ENCODE measurements at regions of chr1 and their contacts with region 1.

Region 1: DNA sequence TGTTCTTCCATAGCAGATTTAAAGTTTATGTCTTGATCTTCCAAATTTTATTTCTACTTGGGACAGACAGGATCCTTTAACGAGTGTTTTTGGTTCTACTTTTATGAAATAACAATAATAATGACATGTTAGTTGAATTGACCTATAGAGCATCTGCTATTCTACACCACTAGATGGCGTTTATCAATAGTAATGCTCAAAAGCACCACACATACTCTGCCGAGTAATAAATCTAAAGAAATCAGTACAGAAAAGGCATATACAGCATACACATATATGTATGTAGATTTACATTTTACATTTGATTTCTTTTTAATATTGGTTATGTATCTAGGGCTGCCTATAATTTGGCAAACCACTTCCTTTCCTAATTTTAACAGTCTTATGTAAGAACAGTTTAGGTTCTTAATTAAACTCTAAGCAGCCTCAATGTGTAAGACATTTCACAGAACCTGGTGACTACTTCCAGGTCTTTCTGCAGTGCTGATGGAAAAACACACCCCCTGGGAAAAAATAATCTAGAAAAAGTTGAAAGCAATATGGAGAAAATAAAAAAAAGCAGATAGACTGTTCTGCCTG is 5.9 kb upstream of the SIPA1L2 start:
- DNase-seq: peak in 2 of 5 donors; percentile 58 to 77
- H3K4me3 ChIP-seq: no peak overlapping the region
- H3K27ac ChIP-seq: no peak overlapping the region
- H3K4me1 ChIP-seq: no peaks in the 10 kb centered on the region
- H3K27me3 ChIP-seq: no peaks in the 10 kb centered on the region
- CTCF ChIP-seq: peak; percentile 61

Region 2: DNA sequence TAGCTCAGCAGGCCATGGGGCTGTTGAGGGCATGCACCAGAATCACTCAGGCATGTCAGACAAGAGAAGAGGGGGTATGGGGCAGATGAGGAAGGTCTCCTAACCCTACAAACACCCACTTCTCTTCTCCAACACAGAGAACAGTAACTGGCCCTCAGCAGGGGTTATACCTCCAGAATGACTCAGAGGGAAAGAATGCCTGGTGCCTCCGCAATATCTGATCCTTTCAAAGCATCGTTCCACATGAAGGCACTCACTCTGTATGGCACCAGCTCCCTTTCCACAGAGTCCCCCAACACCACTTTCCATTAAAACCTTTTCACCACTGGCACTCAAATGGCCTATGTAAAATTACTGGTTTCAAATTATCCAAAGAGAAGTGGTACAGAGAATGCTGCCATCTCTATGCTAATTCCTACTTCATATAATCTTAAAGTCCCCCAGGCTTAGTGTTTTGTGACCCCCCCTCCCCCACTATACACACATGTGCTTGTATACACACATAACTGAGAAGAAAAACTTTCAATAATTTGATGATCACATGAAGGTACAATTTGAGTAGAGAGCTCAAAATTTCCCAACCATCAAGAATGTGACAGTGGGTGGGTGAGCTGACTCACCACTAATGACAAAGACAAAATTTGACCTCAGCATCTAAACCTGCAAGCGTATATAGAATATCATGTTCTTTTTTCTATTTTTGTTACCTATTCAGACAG is 97.5 kb before region 1 on chr1:
- intact Hi-C with region 1: no loop called
- DNase-seq: peak in 4 of 5 donors; percentile 63 to 86 (median 72)
- H3K4me3 ChIP-seq: no peak overlapping the region
- H3K27ac ChIP-seq: no peak overlapping the region
- H3K4me1 ChIP-seq: peaks cover 0 to 3% (median 0%) of the 10 kb centered on the region in 3 donors
- H3K27me3 ChIP-seq: no peaks in the 10 kb centered on the region
- CTCF ChIP-seq: no peak

Region 3: GRCh38 chr1:233238884-233239431 is 603.1 kb after region 1 on chr1:
- intact Hi-C with region 1: loop called (anchors 5 kb)
- DNase-seq: peak in 2 of 5 donors; percentile 67 to 73
- H3K4me3 ChIP-seq: no peak overlapping the region
- H3K27ac ChIP-seq: no peak overlapping the region
- H3K4me1 ChIP-seq: peaks cover 0 to 7% (median 7%) of the 10 kb centered on the region in 3 donors
- H3K27me3 ChIP-seq: no peaks in the 10 kb centered on the region
- CTCF ChIP-seq: no peak

Measured in kidney (tissue), 22 donors.